RWPE1 (cell line): ENCODE measurements at regions of chr1 and their contacts with region 1.

Region 1: DNA sequence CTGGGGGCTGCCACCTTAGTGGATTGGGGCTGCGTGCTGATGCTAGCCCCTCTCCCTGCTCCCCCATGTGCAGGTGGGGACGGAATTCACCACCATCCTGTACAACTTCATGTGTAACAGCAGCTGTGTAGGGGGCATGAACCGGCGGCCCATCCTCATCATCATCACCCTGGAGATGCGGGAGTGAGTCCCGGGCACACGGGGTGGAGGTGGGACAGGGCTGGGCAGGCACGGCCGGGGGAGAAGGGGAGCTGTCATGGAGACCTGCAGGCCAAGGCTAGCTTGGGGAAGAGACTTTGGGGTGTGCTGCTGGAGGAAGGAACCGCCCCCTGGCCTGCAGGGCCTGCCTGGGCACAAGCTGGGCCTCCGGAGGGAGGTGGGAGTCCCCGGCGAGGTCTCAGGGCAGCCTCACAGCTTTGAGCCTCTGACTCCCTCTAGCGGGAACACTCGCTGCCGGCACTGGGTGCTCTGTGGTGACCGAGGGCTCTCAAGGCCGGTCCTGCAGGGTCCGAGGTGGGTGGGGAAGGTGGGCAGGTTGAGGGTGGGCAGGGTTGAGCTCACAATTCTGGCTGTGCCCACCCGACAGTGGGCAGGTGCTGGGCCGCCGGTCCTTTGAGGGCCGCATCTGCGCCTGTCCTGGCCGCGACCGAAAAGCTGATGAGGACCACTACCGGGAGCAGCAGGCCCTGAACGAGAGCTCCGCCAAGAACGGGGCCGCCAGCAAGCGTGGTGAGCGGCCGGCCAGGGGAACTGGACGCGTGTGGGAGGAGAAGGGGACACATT is 25.0 kb upstream of the CCDC27 start:
- DNase-seq: no peak
- H3K27ac ChIP-seq: peak overlapping the region; percentile 76; the same call in 1 of the 2 replicates
- CTCF ChIP-seq: peak; percentile 29; the same call in 1 of the 2 replicates

Region 2: DNA sequence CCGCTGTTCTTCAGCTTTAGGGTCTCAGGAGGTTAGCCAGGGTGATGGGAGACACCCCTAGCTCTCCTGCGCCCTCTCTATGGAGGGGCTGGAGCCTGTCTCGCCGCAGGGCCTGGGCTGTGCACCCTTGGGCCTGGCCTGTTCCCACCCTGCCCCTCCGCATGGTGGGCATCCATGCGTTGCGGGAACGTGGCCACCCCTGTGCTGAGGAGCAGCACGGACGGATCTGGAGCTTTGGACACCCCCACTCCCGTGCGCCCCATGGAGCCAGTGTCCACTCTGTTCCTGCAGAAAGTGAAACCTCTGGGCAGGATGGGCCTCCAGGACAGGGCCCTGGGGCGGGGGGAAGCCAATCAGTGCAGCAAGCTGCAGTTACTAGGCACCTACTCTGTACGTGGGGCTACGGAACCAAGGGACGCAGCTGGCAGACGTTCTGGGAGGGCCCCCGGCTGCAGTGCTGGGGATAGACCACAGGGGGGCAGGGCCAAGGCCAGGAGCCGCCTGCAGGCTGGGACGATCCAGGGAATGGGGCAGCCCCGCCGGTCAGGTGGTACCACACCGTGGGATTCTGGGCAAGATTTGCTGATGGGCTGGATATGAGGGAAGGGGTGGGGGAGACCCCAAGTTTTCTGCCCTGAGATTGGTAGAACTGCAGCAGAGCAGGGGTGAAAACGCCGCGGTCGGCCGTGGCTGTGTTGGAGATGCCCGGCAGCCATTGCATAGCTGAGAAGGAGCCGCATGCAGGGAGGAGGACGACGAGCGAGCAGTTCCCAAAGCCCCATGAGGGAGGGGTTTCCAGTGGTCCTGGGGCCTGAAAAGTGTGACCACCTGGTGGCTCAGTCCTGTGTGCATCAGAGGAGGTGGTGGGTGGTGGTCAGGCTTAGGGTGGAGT is 31.7 kb before region 1 on chr1:
- CTCF ChIA-PET with region 1: interaction called, 30 read pairs
- POLR2A ChIA-PET with region 1: no interaction called
- DNase-seq: peak; percentile 65
- H3K27ac ChIP-seq: peak overlapping the region; percentile 100
- CTCF ChIP-seq: peak; percentile 91

Region 3: DNA sequence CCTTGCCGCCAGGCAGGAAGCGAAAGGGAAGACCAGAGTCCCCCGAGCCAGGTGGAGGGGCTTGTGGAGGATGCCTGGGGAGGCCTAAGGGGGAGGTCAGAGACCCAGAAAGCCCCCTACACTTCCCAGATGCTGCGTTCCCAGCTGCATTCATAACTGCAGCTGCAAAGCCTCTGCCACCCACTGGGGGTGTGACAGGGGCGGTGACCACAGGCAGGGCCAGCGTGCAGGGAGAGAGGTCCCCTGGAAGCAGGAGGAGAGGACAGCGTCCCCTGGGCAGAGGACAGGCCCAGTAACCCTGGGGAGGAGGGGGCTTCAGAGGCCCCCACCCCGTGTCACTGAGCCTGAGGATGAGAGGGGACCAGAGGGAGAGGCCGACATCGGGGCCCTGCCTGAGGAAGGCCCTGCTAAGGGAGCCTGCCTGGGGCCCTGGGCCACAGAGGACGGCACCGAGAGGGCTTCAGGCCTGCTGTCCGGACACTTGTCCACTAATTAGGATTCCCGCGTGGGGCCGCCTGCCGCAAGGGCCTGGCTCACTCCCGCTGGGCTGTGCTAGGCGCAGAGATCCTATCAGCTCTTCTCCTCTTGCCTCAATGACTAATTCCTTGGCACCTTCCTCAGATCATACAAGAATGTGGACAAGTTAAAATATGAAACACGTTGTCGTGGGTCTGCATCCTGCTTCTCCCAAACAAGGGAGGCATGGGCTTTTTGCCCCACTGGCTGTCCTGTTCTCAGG is 24.1 kb before region 1 on chr1:
- CTCF ChIA-PET with region 1: interaction called, 10 read pairs
- POLR2A ChIA-PET with region 1: no interaction called
- DNase-seq: no peak
- H3K27ac ChIP-seq: peak overlapping the region; percentile 100
- CTCF ChIP-seq: peak; percentile 27; the same call in 1 of the 2 replicates

Region 4: GRCh38 chr1:3712573-3713535 is 14.4 kb before region 1 on chr1:
- CTCF ChIA-PET with region 1: interaction called, 11 read pairs
- POLR2A ChIA-PET with region 1: no interaction called
- DNase-seq: no peak
- H3K27ac ChIP-seq: peak overlapping the region; percentile 100
- CTCF ChIP-seq: no peak